HepG2 (cell line): ENCODE measurements at regions of chr1 and their contacts with region 1.

Region 1: GRCh38 chr1:56758135-56758534 is 61.1 kb downstream of the FYB2 start:
- DNase-seq: peak; percentile 42
- ATAC-seq: peak; percentile 87
- H3K4me3 ChIP-seq: no peak overlapping the region
- H3K27ac ChIP-seq: no peak overlapping the region
- H3K4me1 ChIP-seq: peaks cover 20% of the 10 kb centered on the region
- H3K27me3 ChIP-seq: no peaks in the 10 kb centered on the region
- CTCF ChIP-seq: peak; percentile 79
- EP300 ChIP-seq: no peak
- POLR2A ChIP-seq: no peak
- RAD21 ChIP-seq: 0 out of 2 replicates have a peak, but pooled peaks have one; percentile 57

Region 2: DNA sequence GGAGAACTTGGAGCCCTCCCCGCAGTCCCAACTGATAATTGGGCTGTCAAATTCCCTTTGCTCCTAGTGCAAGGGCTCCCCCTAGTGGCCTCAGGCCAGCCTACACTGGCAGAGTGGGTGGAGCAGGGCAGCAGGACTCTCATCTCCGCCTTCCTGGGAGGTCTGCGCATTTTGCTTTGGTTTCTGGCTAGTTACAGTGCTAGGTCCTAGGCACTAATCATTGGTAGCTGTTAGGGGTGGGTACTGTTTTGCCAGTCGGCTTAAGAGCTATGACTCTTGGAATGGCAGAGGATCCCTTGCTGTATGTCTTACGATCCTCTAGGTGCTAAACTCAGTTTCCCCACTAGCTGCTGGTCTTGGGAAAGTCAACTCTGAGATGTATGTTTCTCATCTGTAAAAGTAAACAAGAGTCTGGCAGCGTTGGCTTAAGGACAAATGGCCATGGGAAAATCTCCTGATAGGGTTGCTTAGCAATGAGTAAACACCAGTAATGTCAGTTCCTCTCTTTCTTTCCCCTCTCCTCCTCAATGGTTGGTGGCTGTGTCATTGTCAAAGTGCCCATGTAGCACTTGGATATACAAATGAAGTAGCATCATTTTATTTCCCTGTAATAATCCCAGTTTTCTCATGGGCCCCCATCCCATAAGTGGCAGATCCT is 63.1 kb after region 1 on chr1:
- CTCF ChIA-PET with region 1: interaction called, 3 read pairs
- POLR2A ChIA-PET with region 1: no interaction called
- in situ Hi-C with region 1: loop called (anchors 5 kb)
- intact Hi-C with region 1: loop called (anchors 1 kb)
- DNase-seq: peak; percentile 73
- ATAC-seq: peak; percentile 63
- H3K4me3 ChIP-seq: peak overlapping the region in 1 of 3 experiments; percentile 32; a peak in 2 of 6 replicates
- H3K27ac ChIP-seq: peak overlapping the region; percentile 52
- H3K4me1 ChIP-seq: peaks cover 67% of the 10 kb centered on the region
- H3K27me3 ChIP-seq: no peaks in the 10 kb centered on the region
- CTCF ChIP-seq: peak; percentile 97
- EP300 ChIP-seq: no peak
- POLR2A ChIP-seq: no peak
- RAD21 ChIP-seq: peak; percentile 94